ENCODE measurements at regions of chr10 and their contacts with region 1.

Region 1: GRCh38 chr10:114694752-114695151 is 36.7 kb upstream of the ABLIM1 start:
- H3K4me3 ChIP-seq: no peak overlapping the region
- H3K27ac ChIP-seq: no peak overlapping the region
- H3K4me1 ChIP-seq: peaks cover 13% of the 10 kb centered on the region
- CTCF ChIP-seq: 0 out of 2 replicates have a peak, but pooled peaks have one; percentile 12

Region 2: DNA sequence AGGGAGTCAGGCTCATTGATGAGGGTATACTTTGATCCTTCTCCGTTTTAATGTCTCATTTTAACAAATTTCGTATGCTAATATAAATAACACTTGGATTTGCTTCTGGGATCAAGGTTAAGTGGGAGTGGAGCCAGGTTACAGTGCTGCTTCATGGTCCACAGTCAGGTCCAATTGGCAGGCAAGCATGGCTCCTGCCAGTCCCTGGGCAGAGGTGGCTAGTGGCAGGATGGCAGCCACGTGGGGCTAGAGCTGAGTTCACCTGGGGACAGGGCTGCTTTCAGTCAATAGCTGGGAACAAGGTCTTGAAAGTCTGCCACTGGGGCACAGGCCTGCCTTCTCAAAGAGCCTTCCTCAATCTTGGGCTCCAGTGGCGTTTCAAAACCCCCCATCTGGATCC is 471.7 kb before region 1 on chr10:
- CTCF ChIA-PET with region 1: no interaction called
- POLR2A ChIA-PET with region 1: no interaction called
- H3K4me3 ChIP-seq: no peak overlapping the region
- H3K27ac ChIP-seq: no peak overlapping the region
- H3K4me1 ChIP-seq: no peaks in the 10 kb centered on the region
- CTCF ChIP-seq: no peak

Region 3: GRCh38 chr10:114550756-114551635 is 143.8 kb before region 1 on chr10:
- CTCF ChIA-PET with region 1: interaction called, 57 read pairs
- POLR2A ChIA-PET with region 1: interaction called, 3 read pairs
- H3K4me3 ChIP-seq: no peak overlapping the region
- H3K27ac ChIP-seq: peak overlapping the region; percentile 38
- H3K4me1 ChIP-seq: peaks cover 10% of the 10 kb centered on the region
- CTCF ChIP-seq: no peak

Region 4: GRCh38 chr10:114631666-114632417 is 62.9 kb before region 1 on chr10:
- CTCF ChIA-PET with region 1: interaction called, 10 read pairs
- POLR2A ChIA-PET with region 1: interaction called, 3 read pairs
- H3K4me3 ChIP-seq: peak overlapping the region; percentile 47
- H3K27ac ChIP-seq: peak overlapping the region; percentile 54; the same call in 1 of the 2 replicates
- H3K4me1 ChIP-seq: peaks cover 27% of the 10 kb centered on the region
- CTCF ChIP-seq: peak; percentile 39; the same call in 1 of the 2 replicates

Region 5: GRCh38 chr10:114648368-114648767 is 46.4 kb before region 1 on chr10:
- CTCF ChIA-PET with region 1: interaction called, 10 read pairs
- POLR2A ChIA-PET with region 1: no interaction called
- H3K4me3 ChIP-seq: no peak overlapping the region
- H3K27ac ChIP-seq: no peak overlapping the region; the same call in 1 of the 2 replicates
- H3K4me1 ChIP-seq: peaks cover 19% of the 10 kb centered on the region
- CTCF ChIP-seq: no peak

Region 6: GRCh38 chr10:114708717-114709335 is 14.1 kb after region 1 on chr10:
- CTCF ChIA-PET with region 1: interaction called, 21 read pairs
- POLR2A ChIA-PET with region 1: interaction called, 4 read pairs
- H3K4me3 ChIP-seq: no peak overlapping the region
- H3K27ac ChIP-seq: no peak overlapping the region
- H3K4me1 ChIP-seq: peaks cover 19% of the 10 kb centered on the region
- CTCF ChIP-seq: no peak

Region 7: GRCh38 chr10:114801411-114801813 is 106.7 kb after region 1 on chr10:
- CTCF ChIA-PET with region 1: no interaction called
- POLR2A ChIA-PET with region 1: no interaction called
- H3K4me3 ChIP-seq: no peak overlapping the region
- H3K27ac ChIP-seq: no peak overlapping the region
- H3K4me1 ChIP-seq: no peaks in the 10 kb centered on the region
- CTCF ChIP-seq: no peak

Measured in HEK293 (cell line).